Activated naive CD4-positive, alpha-beta T cell treated with anti-CD3 and anti-CD28 coated beads for 36 hours (primary cell): ENCODE measurements at regions of chr13 and their contacts with region 1.

Region 1: DNA sequence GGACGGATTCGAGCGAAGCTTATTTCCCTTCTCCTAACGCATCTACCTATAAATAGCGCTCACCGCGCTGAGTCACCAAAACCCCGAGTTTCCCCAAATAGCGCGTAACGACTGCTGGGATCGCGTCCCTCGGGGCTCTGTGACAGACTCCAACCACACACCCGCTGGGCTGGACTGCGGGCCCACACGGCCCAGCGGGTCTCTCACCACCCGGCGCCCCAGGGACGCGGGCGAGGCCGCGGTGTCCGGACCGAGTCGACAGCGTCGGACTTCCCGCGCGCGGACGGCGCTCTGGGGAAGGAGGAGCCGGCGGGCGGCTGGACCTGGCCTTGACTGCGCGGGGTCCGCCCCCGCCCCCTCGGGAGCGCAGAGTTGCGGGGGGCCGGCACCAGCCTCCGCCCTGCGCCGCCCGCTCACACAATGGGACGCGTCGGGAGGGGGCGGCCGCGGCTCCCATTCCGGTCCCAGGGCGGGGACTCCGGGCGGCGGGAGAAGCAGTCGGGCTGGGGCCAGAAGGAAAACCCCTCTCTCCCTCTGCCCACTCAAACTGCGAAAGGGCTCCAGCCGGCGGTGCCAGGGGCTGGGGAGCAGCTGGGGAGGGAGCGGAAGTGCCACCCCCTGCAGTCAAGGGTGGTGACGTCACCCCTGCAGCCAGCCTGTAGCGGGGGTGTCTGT is 108.8 kb downstream of the KCNRG start:
- DNase-seq: peak; percentile 89
- H3K4me3 Mint-ChIP-seq: peak overlapping the region; percentile 77
- H3K27ac Mint-ChIP-seq: peak overlapping the region; percentile 92
- H3K4me1 Mint-ChIP-seq: peaks cover 48% of the 10 kb centered on the region
- H3K27me3 Mint-ChIP-seq: peaks cover 15% of the 10 kb centered on the region

Region 2: DNA sequence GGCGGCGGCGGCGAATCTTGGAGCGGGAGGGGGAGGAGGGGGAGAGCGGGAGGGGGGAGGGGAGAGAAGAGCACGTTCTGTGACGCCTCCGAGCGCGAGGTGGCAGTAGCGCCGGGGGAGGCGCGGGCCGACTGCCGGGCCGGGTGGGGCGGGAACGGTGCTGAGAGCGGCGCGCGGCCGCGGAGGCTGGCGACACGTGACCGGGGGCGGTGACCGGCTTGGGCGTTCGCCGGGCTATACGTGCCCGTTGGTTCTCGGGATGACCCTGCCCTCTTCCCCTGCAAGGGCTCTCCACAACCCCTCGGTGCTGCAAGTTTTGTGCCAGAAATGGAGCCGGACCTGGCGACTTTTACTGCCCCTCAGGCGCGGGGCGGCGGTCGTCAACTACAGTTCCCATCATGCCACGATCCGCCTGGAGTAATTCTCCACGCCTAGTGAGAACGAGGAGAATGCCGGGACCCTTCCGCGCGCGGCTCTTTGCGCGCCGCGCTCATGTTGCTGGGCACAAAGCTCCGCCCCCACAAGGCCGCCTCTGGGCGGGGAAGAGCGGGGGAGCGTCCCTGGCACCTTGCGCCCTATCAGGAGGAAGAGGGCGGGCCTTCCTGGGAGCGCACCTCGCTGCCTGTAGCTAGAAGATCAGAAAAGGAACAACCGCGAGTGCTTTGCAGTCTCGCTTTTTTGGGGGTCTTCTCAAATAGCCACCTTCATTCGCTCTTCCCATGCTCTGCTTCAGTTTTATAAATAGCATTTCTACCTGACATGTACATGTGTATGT is 331.3 kb before region 1 on chr13 and contains the start of gene KPNA3:
- CTCF ChIA-PET with region 1: no interaction called
- intact Hi-C with region 1: loop called (anchors 2 kb)
- DNase-seq: peak; percentile 96
- H3K4me3 Mint-ChIP-seq: peak within 1 kb of the TSS; percentile 92
- H3K27ac Mint-ChIP-seq: peak within 1 kb of the TSS; percentile 94
- H3K4me1 Mint-ChIP-seq: peaks cover 29% of the 10 kb centered on the region
- H3K27me3 Mint-ChIP-seq: peaks cover 4% of the 10 kb centered on the region
- total RNA-seq, gene KPNA3: 47.9 to 50.7 TPM

Region 3: GRCh38 chr13:50094615-50095293 is 29.2 kb before region 1 on chr13:
- CTCF ChIA-PET with region 1: interaction called, 4 read pairs
- intact Hi-C with region 1: loop called (anchors 1 kb)
- DNase-seq: peak; percentile 42
- H3K4me3 Mint-ChIP-seq: no peak overlapping the region
- H3K27ac Mint-ChIP-seq: no peak overlapping the region
- H3K4me1 Mint-ChIP-seq: peaks cover 30% of the 10 kb centered on the region
- H3K27me3 Mint-ChIP-seq: no peaks in the 10 kb centered on the region

Region 4: GRCh38 chr13:50244713-50245574 is 120.9 kb after region 1 on chr13:
- CTCF ChIA-PET with region 1: no interaction called
- intact Hi-C with region 1: loop called (anchors 1 kb)
- DNase-seq: peak; percentile 84
- H3K4me3 Mint-ChIP-seq: no peak overlapping the region
- H3K27ac Mint-ChIP-seq: peak overlapping the region; percentile 72
- H3K4me1 Mint-ChIP-seq: peaks cover 30% of the 10 kb centered on the region
- H3K27me3 Mint-ChIP-seq: peaks cover 13% of the 10 kb centered on the region

Region 5: DNA sequence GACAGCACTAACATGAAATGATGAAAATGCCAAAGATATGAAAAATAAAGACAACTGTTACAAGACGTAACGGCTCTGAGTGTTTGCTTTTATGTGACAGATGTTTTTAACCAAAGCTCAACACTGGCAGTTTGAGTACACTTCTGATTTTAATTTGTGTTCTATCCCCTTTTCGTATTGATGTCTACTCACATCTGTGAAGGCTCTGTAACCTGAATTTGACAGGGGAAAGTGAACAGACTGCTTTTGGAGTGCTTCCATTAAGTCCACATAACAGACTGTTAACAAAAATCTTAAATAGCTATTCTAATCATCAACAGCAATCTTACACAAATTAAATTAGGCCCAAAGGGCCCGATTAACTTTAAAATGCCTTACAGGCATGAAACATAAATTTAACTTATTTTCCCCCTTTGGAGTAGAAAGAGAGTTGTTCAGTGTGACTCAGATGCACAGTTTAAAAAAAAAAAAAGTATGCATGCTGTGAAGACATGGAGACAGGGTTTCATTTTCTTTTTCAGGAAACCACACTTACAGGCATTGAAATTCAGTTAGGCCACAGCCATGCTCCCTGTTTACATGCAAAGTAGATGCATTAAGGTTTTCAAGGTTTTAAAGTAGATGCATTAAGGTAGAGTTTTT is 769.3 kb after region 1 on chr13:
- CTCF ChIA-PET with region 1: no interaction called
- intact Hi-C with region 1: loop called (anchors 5 kb)
- DNase-seq: peak; percentile 41
- H3K4me3 Mint-ChIP-seq: peak overlapping the region; percentile 36
- H3K27ac Mint-ChIP-seq: peak overlapping the region; percentile 79
- H3K4me1 Mint-ChIP-seq: peaks cover 38% of the 10 kb centered on the region
- H3K27me3 Mint-ChIP-seq: no peaks in the 10 kb centered on the region